A549 (cell line): ENCODE measurements at regions of chr17 and their contacts with region 1.

Region 1: GRCh38 chr17:65100316-65101140 is 36.6 kb upstream of the RGS9 start:
- DNase-seq: peak; percentile 80 to 83
- ATAC-seq: peak; percentile 89 to 95
- H3K4me3 ChIP-seq: peak overlapping the region; percentile 55
- H3K27ac ChIP-seq: peak overlapping the region; percentile 75 to 87
- H3K4me1 ChIP-seq: peaks cover 25% of the 10 kb centered on the region
- CTCF ChIP-seq: peak; percentile 98
- EP300 ChIP-seq: no peak
- POLR2A ChIP-seq: peak; percentile 46
- RAD21 ChIP-seq: peak; percentile 69 to 95

Region 2: DNA sequence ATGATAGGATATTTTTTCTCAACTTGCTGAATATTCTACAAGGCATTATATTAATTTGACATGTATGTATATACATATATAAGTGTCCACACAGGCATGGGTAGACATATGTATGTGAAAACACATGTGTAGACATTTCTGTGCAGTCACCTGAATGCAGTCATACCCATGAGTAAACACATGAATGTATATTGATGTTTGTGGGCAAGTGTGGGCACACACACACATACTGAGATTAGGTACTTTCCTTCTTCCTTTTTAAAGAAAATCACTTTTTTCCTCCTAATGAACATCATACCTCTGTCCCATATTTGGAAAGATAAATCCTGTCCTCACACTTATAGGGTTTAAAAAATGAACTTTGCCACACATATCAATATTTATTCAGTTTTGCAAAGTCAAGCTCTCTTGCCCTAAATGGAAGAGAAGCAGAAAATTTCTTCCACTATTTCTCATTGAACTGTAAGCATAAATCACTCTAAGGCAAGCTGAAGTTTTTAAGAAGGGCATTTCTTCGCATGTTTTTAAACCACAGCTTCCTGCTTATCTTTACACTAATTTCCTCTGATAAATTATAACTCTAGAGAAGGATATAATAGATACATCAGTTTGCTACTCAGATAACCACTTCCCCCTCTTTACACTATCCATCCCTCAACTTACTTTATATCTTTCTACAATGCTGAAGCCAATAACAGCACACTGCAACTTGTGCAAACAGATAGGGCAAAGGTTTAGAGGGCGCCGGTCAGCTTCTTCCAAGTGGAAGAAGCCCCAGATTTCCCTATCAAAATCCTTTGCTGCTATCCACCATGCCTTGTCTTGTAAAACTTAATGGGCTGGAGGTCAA is 131.7 kb before region 1 on chr17:
- CTCF ChIA-PET with region 1: interaction called, 39 read pairs
- POLR2A ChIA-PET with region 1: interaction called, 35 read pairs
- DNase-seq: no peak
- ATAC-seq: no peak
- H3K4me3 ChIP-seq: no peak overlapping the region
- H3K27ac ChIP-seq: no peak overlapping the region
- H3K4me1 ChIP-seq: peaks cover 18% of the 10 kb centered on the region
- CTCF ChIP-seq: no peak
- EP300 ChIP-seq: no peak
- POLR2A ChIP-seq: no peak
- RAD21 ChIP-seq: no peak

Region 3: GRCh38 chr17:64991726-64992125 is 108.8 kb before region 1 on chr17:
- CTCF ChIA-PET with region 1: interaction called, 17 read pairs
- POLR2A ChIA-PET with region 1: no interaction called
- DNase-seq: no peak
- ATAC-seq: no peak
- H3K4me3 ChIP-seq: no peak overlapping the region
- H3K27ac ChIP-seq: peak overlapping the region; percentile 74 to 77
- H3K4me1 ChIP-seq: peaks cover 44% of the 10 kb centered on the region
- CTCF ChIP-seq: no peak
- EP300 ChIP-seq: no peak
- POLR2A ChIP-seq: no peak
- RAD21 ChIP-seq: no peak

Region 4: DNA sequence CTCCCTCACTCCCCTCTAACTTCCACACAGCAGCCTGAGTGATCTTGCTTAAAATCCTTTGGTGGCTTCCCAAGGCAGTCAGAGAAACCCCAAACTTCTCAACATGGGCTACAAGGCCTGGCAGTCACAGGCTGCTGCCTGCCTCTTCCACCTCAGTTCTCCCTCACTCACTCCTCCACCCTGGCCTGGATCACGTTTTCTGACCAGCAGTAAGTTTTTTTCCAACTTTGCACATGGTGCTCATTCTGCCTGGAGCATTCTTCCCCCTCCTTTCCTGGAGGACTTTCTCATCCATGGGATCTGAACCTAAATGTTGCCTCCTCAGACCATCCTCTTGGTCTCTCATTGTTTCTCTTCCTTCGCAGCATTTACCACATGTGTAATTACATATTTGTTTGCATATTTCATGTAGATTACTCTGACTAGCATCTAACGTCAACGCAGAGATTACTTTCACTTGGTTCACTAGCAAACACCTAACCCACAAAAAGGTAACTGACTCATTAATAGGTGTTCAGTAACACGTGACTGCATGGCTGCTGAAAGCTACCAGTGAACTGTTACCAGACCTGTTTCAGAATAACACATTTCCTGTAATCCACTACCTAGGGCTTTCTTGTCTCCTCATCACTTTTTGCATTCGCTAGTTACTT is 61.1 kb before region 1 on chr17:
- CTCF ChIA-PET with region 1: interaction called, 10 read pairs
- POLR2A ChIA-PET with region 1: no interaction called
- DNase-seq: no peak
- ATAC-seq: no peak; a peak in 1 of 6 replicates
- H3K4me3 ChIP-seq: no peak overlapping the region
- H3K27ac ChIP-seq: no peak overlapping the region
- H3K4me1 ChIP-seq: peaks cover 6% of the 10 kb centered on the region; the same call in 1 of the 3 replicates
- CTCF ChIP-seq: no peak
- EP300 ChIP-seq: no peak
- POLR2A ChIP-seq: no peak
- RAD21 ChIP-seq: no peak

Region 5: GRCh38 chr17:65064452-65065019 is 36.0 kb before region 1 on chr17:
- CTCF ChIA-PET with region 1: interaction called, 145 read pairs
- POLR2A ChIA-PET with region 1: interaction called, 5 read pairs
- DNase-seq: peak; percentile 32 to 86
- ATAC-seq: peak; percentile 67 to 76
- H3K4me3 ChIP-seq: no peak overlapping the region
- H3K27ac ChIP-seq: peak overlapping the region; percentile 70 to 89
- H3K4me1 ChIP-seq: peaks cover 56% of the 10 kb centered on the region
- CTCF ChIP-seq: no peak
- EP300 ChIP-seq: peak; percentile 22 to 40; a peak in 2 of 5 replicates
- POLR2A ChIP-seq: no peak
- RAD21 ChIP-seq: no peak

Region 6: GRCh38 chr17:65122836-65123756 is 22.6 kb after region 1 on chr17:
- CTCF ChIA-PET with region 1: interaction called, 30 read pairs
- POLR2A ChIA-PET with region 1: interaction called, 4 read pairs
- DNase-seq: peak; percentile 94 to 98
- ATAC-seq: peak; percentile 93 to 95
- H3K4me3 ChIP-seq: peak overlapping the region; percentile 53
- H3K27ac ChIP-seq: peak overlapping the region; percentile 77 to 93
- H3K4me1 ChIP-seq: peaks cover 19% of the 10 kb centered on the region
- CTCF ChIP-seq: no peak
- EP300 ChIP-seq: no peak
- POLR2A ChIP-seq: peak; percentile 86
- RAD21 ChIP-seq: peak in 1 of 2 experiments; percentile 44; a peak in 2 of 5 replicates

Region 7: DNA sequence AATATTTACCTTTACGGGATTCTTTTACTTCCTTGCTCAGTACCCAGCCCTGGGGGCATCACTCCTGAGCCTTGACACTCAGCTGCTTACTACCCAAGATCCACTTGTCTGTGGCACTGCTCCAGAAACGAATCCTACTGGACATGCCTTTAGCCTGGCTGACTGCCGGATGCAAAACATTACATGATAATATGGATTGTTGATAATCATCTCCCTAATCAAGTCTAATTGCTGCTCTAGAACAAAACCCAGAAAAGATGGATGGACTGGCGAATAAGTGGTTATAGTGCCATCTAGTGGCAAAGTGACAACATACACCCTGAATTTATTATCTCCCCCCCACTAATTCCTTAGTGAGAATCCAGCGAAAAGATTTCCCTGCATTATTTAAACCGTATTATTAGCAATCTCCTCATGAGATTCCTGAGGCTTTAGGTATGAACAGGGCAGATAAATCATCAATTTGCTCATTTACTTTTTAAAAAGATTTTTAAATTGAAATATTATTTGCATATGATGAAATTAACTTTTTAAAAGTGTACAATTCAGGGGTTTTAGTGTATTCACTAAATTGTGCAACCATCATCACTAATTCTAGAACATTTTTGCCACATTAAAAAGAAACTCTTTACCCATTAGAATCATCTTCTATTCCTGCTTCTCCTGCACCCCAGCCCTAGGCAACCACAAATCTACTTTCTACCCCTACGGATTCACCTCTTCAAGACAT is 98.3 kb after region 1 on chr17:
- CTCF ChIA-PET with region 1: interaction called, 16 read pairs
- POLR2A ChIA-PET with region 1: no interaction called
- DNase-seq: peak; percentile 73 to 97
- ATAC-seq: peak; percentile 25 to 71; a peak in 4 of 6 replicates
- H3K4me3 ChIP-seq: no peak overlapping the region
- H3K27ac ChIP-seq: no peak overlapping the region
- H3K4me1 ChIP-seq: peaks cover 3% of the 10 kb centered on the region; the same call in 2 of the 3 replicates
- CTCF ChIP-seq: peak; percentile 97
- EP300 ChIP-seq: no peak
- POLR2A ChIP-seq: no peak
- RAD21 ChIP-seq: peak; percentile 95 to 97

Region 8: DNA sequence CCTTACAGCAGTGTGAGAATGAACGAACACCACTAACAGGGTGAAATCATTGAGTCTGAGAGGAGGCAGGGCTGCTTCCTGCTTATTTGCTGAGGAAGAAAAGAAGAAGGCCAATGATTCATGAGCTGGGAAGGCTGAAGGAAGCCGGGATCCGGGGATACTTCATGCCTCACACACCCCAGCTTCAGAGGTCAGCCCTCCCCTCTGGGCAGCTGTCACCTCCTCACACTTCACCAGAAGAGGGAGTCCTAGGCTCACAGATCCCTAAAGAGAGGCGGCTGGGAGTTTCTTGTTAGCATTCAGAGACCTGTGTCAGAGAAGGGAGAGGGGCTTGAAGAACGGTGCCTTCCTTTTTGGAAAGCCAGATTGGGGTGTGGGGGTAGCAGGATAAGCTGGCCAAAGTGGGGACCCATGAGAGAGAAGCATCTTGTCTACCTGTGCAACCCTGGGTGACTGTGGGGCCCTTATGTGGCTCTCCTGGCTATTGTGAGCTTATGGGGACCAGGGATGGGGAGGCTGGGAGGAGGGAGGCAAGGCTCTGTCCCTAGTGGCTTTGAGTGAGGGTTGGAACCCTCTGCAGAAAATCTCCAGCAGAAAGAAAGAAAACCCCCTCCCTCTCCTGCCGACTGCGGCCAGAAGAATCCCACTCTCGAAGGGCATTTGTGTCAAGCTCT is 131.3 kb after region 1 on chr17:
- CTCF ChIA-PET with region 1: no interaction called
- POLR2A ChIA-PET with region 1: no interaction called
- DNase-seq: peak; percentile 76 to 94
- ATAC-seq: peak; percentile 89 to 96
- H3K4me3 ChIP-seq: no peak overlapping the region
- H3K27ac ChIP-seq: no peak overlapping the region
- H3K4me1 ChIP-seq: no peaks in the 10 kb centered on the region
- CTCF ChIP-seq: peak; percentile 89
- EP300 ChIP-seq: no peak
- POLR2A ChIP-seq: no peak
- RAD21 ChIP-seq: peak; percentile 95 to 97